ENCODE measurements at regions of chr4 and their contacts with region 1.

Region 1: DNA sequence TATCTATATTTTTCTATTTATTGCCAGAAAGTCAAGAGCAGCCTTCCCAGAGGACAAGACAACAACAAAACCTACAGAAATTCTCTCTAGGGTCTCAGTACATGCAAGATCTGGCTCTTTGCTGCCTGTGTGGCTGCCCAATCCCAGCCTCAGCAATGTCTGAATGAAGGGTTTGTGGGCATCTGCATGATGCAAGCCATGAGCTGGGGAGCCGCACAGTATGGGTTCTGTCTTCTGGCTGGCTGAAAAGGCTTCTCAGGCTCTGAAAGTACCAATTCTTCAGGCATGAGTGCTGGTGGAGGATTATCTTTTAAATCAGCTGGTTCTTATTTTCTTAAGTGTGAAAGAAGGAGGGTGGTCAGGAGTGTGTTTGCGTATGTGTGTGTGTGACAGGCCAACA is 104.6 kb downstream of the PDGFRA start:
- DNase-seq: peak; percentile 5 to 68 (median 56)
- H3K4me3 ChIP-seq: peak overlapping the region in 2 of 59 donors; percentile 10 to 18
- H3K27ac ChIP-seq: peak overlapping the region in 52 of 59 donors; percentile 8 to 88 (median 68)
- H3K27me3 ChIP-seq: peaks cover 0 to 8% (median 0%) of the 10 kb centered on the region in 45 donors
- CTCF ChIP-seq: no peak

Region 2: DNA sequence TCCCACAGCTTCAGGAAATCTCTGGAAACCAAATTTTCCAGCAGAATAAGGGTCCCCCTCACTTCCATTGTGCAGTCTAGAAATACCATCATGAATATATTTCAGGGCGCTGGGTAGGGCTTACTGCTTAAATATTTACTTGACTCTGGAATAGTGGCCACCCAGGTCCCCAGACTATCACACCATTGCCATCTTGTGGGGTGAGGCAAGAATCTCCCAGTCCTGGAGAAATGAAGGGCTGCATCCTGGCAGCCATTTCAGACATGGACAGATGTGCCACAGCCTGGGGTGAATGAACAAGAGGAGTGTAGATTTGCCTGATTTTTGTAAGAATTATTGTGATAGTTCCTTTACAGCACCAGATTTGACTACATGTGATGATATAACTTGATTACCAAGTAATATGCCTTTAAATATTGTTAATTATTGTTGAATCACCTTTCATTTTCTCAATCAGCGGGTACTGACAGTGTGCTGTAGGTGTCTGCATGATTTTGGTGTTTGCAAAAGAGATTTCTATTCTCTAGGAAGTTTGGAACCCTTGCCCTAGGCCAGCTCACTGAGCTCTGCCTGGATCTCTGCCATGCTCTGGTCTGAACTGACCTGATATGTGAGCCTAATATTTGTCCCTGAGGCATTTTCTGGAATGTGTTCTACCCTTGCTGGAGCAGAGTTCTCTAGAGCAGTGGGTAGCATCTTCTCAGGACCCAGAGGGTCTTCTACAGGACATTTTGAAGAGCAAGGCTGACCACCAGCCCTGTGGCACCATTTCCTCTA is 507.5 kb after region 1 on chr4:
- intact Hi-C with region 1: loop called in 1 of 2 experiments (anchors 5 kb)
- DNase-seq: peak in 4 of 10 donors; percentile 15 to 47 (median 38)
- H3K4me3 ChIP-seq: no peak overlapping the region
- H3K27ac ChIP-seq: peak overlapping the region in 4 of 59 donors; percentile 10 to 42 (median 20)
- H3K27me3 ChIP-seq: no peaks in the 10 kb centered on the region
- CTCF ChIP-seq: peak in 35 of 56 donors; percentile 16 to 57 (median 32)

Measured in dorsolateral prefrontal cortex (tissue), 120 donors.